Endothelial cell of umbilical vein (primary cell): ENCODE measurements at regions of chr10 and their contacts with region 1.

Region 1: DNA sequence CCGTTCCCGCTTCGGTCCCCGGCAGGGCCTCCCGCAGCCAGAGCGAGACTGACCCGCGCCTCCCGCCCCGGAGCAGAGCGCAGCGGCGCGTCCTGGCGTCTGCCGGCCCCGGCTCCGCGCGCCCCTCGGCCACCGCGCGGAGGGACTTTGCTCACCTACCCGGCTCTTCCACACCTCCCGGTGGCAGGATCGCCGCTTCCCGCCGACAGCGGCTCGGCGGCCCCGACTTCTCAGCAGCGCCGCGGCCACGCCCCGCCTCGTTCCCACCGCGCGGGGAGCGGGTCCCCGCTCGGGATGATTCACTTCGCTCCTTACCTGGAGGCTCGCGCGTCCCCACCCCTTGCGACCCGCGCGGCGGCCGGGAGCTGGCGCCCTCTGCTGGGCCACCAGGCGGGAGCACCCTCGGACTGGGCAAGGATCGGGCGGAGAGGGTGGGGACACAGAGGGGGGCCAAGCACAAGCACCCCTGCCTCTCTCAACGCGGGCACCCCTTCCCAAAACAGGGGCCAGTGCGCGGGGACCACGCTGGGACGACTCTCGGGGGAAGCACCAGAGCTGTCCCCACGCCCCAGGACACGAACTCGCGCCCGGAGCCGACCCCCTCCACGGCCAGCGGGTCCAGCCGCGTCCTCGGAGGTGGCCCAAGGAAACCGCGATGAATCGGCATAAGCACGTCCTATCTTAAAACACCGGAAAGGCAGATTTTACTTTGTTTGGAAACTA is 101.0 kb upstream of the SVIL start:
- DNase-seq: peak; percentile 89
- H3K4me3 ChIP-seq: peak overlapping the region; percentile 69 to 88 (median 82)
- H3K27ac ChIP-seq: peak overlapping the region; percentile 82
- H3K4me1 ChIP-seq: peaks cover 15% of the 10 kb centered on the region
- H3K27me3 ChIP-seq: no peaks in the 10 kb centered on the region
- CTCF ChIP-seq: peak; percentile 90 to 92
- POLR2A ChIP-seq: peak; percentile 20

Region 2: GRCh38 chr10:29555746-29556481 is 179.8 kb before region 1 on chr10:
- CTCF ChIA-PET with region 1: no interaction called
- POLR2A ChIA-PET with region 1: no interaction called
- dilution Hi-C with region 1: no loop called
- intact Hi-C with region 1: loop called (anchors 10 kb)
- DNase-seq: no peak
- H3K4me3 ChIP-seq: no peak overlapping the region
- H3K27ac ChIP-seq: peak overlapping the region; percentile 50
- H3K4me1 ChIP-seq: peaks cover 10% of the 10 kb centered on the region
- H3K27me3 ChIP-seq: no peaks in the 10 kb centered on the region
- CTCF ChIP-seq: no peak
- POLR2A ChIP-seq: no peak

Region 3: DNA sequence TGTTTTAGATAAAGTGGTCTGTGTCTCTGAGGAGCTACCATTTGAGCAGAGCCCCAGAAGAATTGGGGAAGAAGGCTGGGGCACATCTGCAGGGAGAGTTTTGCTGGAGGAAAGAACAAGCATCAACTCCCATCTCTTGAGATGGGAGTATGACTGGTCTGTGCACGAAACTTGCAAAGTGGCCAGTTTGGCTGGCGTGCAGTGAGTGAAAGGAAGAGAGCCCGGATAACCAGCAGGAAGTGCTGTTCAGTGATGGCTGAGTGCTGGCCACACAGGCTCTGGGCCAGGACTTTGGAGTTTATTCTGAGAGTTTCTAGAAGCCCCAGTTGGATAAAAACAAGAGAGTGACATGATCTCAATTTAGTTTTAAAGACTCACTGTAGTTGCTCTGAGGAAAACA is 66.6 kb before region 1 on chr10:
- CTCF ChIA-PET with region 1: interaction called, 4 read pairs
- POLR2A ChIA-PET with region 1: no interaction called
- dilution Hi-C with region 1: no loop called
- intact Hi-C with region 1: loop called (anchors 2 kb)
- DNase-seq: peak; percentile 78
- H3K4me3 ChIP-seq: no peak overlapping the region
- H3K27ac ChIP-seq: peak overlapping the region; percentile 58
- H3K4me1 ChIP-seq: peaks cover 31% of the 10 kb centered on the region
- H3K27me3 ChIP-seq: no peaks in the 10 kb centered on the region
- CTCF ChIP-seq: peak in 1 of 2 donors; percentile 17
- POLR2A ChIP-seq: peak; percentile 32

Region 4: DNA sequence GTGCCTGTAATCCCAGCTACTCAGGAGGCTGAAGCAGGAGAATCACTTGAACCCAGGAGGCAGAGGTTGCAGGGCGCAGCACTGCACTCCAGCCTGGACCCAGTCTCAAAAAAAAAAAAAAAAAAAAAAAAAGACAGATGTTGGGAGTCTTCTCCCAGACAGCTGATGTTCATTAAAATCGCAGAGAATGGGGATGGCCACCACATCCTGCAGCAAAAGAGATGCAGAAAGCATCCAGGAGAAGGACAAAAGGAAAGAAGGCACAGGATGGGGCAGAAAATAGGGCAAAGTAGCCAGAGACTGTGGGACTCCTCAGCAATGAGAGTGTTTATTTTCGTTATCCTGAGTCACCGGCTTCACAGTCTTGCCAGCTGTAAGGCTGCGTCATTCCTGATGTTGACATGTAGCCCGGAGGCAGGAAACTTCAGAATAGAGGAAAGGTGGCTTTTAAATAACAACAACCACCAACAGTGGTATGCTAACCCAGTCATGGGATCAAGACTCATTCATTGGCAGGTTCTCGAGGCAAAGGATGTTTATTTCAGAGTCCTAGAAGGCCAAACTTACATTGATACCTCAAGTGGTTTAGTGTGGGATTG is 48.5 kb after region 1 on chr10:
- CTCF ChIA-PET with region 1: interaction called, 4 read pairs
- POLR2A ChIA-PET with region 1: no interaction called
- dilution Hi-C with region 1: no loop called
- intact Hi-C with region 1: loop called (anchors 2 kb)
- DNase-seq: peak; percentile 99
- H3K4me3 ChIP-seq: no peak overlapping the region
- H3K27ac ChIP-seq: peak overlapping the region; percentile 82
- H3K4me1 ChIP-seq: peaks cover 27% of the 10 kb centered on the region
- H3K27me3 ChIP-seq: no peaks in the 10 kb centered on the region
- CTCF ChIP-seq: no peak
- POLR2A ChIP-seq: peak; percentile 63

Region 5: DNA sequence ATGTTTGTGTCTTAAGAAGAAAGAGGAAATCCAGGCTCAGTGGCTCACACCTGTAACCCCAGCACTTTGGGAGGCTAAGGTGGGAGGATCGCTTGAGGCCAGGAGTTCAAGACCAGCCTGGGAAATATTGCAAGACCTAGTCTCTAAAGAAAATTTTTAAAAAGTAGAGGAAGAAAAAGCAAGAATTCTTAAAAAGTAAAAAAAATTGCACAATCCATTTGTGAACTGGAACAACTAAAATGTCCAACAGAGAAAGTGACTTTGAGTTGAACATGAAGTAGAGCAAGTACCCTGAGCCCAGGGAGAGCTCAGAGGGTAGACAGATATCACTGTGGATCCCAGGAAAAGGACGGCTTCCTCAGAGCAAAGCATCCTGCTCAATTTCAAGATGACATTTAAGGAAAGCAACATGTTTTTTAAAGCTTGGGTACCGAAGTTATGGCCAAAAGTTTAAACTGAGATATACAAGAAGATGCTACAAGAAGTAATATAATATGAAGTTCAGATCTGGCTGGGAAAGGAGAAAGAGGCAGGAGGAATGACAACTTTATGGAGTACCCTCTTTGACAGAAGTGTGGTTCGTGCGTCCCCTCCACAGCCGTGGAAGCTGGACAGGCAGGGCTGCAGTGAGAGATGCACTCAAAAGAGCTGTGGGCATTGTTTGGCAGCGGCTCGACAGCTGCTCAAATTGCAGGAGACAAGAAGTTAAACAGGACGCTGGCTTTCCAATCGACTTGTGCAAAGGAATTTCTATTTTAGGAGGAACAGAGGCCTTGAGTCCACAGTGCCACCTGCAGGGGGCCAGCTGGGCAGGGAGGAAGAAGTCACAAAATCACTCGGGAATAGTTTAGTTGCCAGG is 122.3 kb after region 1 on chr10:
- CTCF ChIA-PET with region 1: interaction called, 28 read pairs
- POLR2A ChIA-PET with region 1: no interaction called
- dilution Hi-C with region 1: no loop called
- intact Hi-C with region 1: loop called (anchors 1 kb)
- DNase-seq: peak; percentile 92
- H3K4me3 ChIP-seq: no peak overlapping the region
- H3K27ac ChIP-seq: no peak overlapping the region
- H3K4me1 ChIP-seq: peaks cover 21% of the 10 kb centered on the region
- H3K27me3 ChIP-seq: no peaks in the 10 kb centered on the region
- CTCF ChIP-seq: peak; percentile 79 to 86
- POLR2A ChIP-seq: no peak

Region 6: DNA sequence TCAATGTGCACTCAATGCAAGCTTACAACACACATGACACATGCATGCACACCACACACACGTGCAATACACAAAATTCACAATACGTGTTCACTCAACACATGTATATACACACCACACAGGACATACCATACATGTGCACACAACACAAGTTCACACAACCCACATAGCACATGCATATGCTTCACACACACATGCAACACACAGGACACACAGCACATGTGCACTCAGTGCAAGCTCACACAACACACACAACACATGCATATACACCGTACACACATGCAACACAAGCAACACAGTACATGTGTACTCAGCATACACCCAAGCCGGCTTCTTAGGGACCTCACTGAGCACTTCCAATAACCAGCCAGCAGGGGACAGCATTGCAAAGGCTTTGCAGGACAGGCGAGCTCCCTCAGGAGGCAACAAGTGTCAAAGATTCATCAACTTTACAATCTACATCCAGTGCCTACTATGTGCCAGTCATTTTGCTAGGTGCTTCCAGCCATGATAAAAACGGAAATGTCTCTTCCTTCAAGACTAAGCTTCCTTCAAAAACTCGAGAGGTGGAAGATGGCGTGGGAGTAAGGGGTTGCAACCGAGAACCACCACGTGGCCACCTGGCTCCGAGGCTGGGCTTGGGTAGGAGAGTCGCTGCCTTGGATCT is 262.5 kb after region 1 on chr10:
- CTCF ChIA-PET with region 1: interaction called, 15 read pairs
- POLR2A ChIA-PET with region 1: no interaction called
- dilution Hi-C with region 1: no loop called
- intact Hi-C with region 1: loop called (anchors 1 kb)
- DNase-seq: peak; percentile 84
- H3K4me3 ChIP-seq: no peak overlapping the region
- H3K27ac ChIP-seq: no peak overlapping the region
- H3K4me1 ChIP-seq: peaks cover 6% of the 10 kb centered on the region
- H3K27me3 ChIP-seq: no peaks in the 10 kb centered on the region
- CTCF ChIP-seq: peak; percentile 98
- POLR2A ChIP-seq: no peak